ENCODE measurements at regions of chr17 and their contacts with region 1.

Region 1: GRCh38 chr17:34913001-34913400 is 48.3 kb downstream of the CCT6B start:
- DNase-seq: no peak
- H3K4me3 ChIP-seq: no peak overlapping the region
- CTCF ChIP-seq: no peak

Region 2: GRCh38 chr17:34865732-34866131 is 47.3 kb before region 1 on chr17:
- in situ Hi-C with region 1: no loop called
- DNase-seq: no peak
- H3K4me3 ChIP-seq: no peak overlapping the region
- CTCF ChIP-seq: no peak

Region 3: GRCh38 chr17:34879146-34879545 is 33.9 kb before region 1 on chr17:
- in situ Hi-C with region 1: loop called (anchors 5 kb)
- DNase-seq: no peak
- H3K4me3 ChIP-seq: no peak overlapping the region
- CTCF ChIP-seq: no peak

Region 4: DNA sequence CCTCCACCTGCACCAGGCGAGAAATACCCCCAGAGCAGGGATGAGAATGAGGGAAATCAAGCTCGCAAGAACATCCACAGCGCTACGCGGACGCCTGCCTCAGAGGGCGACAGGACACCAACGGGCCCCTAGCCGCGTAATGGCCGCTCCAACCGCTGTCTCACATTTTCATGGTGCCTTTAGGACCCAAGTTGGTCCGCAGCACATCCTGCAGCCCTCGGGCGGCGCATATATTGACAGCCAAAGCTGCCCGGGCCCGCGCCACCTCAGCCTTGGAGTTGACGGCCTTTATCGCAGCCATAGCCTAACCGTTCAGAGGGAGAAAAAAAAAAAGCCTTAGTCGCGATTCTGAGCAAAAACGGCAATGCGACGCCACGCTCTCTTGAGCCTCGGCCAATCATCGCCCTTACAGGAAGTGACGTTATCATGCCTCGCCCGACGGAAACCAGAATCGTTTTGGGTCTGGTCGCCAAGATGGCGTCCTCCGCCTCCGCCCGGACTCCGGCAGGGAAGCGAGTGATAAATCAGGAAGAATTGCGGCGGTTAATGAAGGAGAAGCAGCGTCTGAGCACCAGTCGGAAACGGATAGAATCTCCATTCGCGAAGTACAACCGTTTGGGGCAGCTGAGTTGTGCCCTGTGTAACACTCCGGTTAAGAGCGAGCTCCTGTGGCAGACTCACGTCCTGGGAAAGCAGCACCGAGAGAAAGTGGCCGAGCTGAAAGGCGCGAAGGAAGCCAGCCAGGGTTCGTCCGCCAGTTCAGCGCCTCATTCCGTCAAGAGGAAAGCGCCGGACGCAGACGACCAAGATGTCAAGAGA is 48.3 kb after region 1 on chr17 and contains the starts of genes CCT6B and ZNF830:
- in situ Hi-C with region 1: no loop called
- DNase-seq: peak; percentile 90
- H3K4me3 ChIP-seq: peak within 1 kb of the TSS; percentile 98
- CTCF ChIP-seq: no peak

Measured in astrocyte of the cerebellum (primary cell).